ENCODE measurements at regions of chr21 and their contacts with region 1.

Region 1: DNA sequence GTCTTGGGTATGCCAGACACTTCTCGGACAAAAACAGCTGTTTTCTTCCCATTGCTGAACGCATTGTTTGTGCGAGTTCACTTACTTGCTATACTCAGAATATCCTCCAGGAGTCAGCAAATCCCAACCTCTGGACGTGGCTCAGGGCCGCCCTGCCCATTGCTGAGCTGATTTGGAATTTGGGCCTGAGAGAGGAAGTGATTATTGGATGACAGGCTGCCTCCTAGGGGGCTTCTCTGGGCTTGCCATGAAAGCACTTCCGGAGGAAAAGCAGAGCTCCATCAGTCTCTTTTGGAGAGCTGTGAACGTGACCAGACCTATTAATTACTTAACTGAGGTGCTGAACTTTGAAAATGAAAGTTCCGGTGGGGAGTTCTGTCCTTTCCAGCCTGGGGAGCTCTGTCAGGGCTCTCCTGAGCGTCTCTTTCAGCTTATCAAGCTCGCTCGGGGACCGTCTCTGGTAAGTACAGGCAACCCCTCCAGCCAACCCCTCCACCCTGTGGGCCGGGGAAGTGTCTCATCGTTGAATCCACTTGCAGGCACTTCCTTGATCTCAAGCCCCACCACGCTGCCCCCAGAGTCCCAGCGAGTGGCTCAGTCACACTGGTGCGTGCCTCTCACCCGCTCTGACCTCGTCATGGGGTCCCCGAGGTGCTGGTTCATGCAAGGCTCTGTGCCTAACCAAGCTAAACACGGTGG is 76.9 kb downstream of the CLIC6 start:
- DNase-seq: peak; percentile 76
- H3K4me3 ChIP-seq: peak overlapping the region in 1 of 2 experiments; percentile 14; a peak in 1 of 4 replicates
- H3K27ac ChIP-seq: no peak overlapping the region; a peak in 1 of 4 replicates
- H3K4me1 ChIP-seq: no peaks in the 10 kb centered on the region; a peak in 1 of 4 replicates
- H3K27me3 ChIP-seq: peaks cover 5% of the 10 kb centered on the region; the same call in 1 of the 2 replicates
- CTCF ChIP-seq: peak; percentile 91
- EP300 ChIP-seq: no peak
- RAD21 ChIP-seq: peak; percentile 97

Region 2: DNA sequence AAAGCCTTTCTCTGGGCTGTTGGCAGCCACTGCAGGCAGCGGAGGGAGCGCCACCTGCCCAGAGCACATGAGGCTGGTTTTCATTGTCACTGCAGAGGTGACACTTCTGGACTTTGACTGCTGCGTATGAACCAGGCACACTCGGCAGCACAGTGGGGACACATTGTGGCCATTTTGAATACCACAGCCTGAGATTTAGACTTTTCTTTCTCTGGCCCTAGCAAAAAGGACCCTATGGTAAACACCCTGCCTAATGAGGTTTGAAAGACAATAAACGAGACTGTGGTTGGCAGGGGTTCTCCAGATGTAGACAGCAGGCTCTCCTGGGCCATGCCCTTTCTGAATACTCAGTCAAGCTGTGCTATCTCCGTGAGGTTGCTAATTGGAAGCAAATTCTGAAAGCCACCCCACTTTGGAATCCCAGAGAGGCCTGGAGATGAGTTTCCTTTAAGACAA is 393.9 kb before region 1 on chr21:
- CTCF ChIA-PET with region 1: no interaction called
- POLR2A ChIA-PET with region 1: no interaction called
- DNase-seq: peak; percentile 66
- H3K4me3 ChIP-seq: no peak overlapping the region; a peak in 1 of 4 replicates
- H3K27ac ChIP-seq: no peak overlapping the region
- H3K4me1 ChIP-seq: no peaks in the 10 kb centered on the region; a peak in 1 of 4 replicates
- H3K27me3 ChIP-seq: no peaks in the 10 kb centered on the region; the same call in 1 of the 2 replicates
- CTCF ChIP-seq: peak; percentile 66
- EP300 ChIP-seq: no peak
- RAD21 ChIP-seq: peak; percentile 95

Region 3: DNA sequence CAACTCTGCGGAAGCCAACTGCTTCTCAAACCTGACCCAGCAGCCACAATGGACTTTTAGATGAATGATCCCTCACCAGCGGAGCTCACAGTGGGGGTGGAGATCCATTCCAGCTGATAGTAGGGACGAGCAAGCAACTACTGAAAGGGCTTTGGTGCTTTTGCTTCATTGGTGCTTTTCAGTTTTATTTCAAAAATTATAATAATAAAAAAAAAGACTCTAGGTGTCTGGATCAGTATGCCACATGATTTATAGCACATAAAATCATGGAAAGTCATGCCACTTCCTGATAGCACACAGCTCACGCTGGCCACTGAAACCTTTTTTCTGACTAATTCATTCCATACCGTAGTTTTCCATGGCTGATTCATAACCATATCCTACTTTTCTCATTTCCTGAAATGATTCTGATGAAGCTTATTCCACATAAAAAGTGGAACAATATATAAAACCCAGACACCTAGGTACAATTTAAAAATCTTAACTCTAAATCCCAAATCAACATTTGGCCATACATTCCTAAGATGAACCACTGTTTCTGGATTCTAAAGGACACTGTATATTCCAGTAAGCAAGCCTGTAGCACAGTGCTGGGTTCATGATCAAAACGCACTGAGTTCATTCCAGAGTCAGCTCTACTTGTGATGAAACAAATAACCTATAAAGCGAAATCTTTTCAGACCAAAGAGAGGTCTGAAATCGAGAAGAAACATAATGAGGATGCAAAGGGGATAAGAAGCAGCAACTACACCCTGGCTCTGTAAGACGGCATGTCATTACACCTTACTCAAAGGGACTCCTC is 192.4 kb before region 1 on chr21:
- CTCF ChIA-PET with region 1: no interaction called
- POLR2A ChIA-PET with region 1: no interaction called
- DNase-seq: no peak
- H3K4me3 ChIP-seq: peak overlapping the region; percentile 9 to 24; a peak in 2 of 4 replicates
- H3K27ac ChIP-seq: peak overlapping the region; percentile 77 to 97
- H3K4me1 ChIP-seq: peaks cover 0 to 19% of the 10 kb centered on the region in 2 experiments; a peak in 1 of 4 replicates
- H3K27me3 ChIP-seq: no peaks in the 10 kb centered on the region
- CTCF ChIP-seq: no peak
- EP300 ChIP-seq: peak in 1 of 2 experiments; percentile 52; a peak in 1 of 4 replicates
- RAD21 ChIP-seq: no peak

Region 4: GRCh38 chr21:34669149-34669879 is 76.4 kb before region 1 on chr21:
- CTCF ChIA-PET with region 1: no interaction called
- POLR2A ChIA-PET with region 1: no interaction called
- DNase-seq: peak; percentile 26
- H3K4me3 ChIP-seq: peak overlapping the region in 1 of 2 experiments; percentile 24; a peak in 2 of 4 replicates
- H3K27ac ChIP-seq: no peak overlapping the region
- H3K4me1 ChIP-seq: peaks cover 0 to 5% of the 10 kb centered on the region in 2 experiments; a peak in 1 of 4 replicates
- H3K27me3 ChIP-seq: peaks cover 80% of the 10 kb centered on the region
- CTCF ChIP-seq: no peak
- EP300 ChIP-seq: no peak
- RAD21 ChIP-seq: no peak

Region 5: GRCh38 chr21:34688145-34688544 is 57.6 kb before region 1 on chr21:
- CTCF ChIA-PET with region 1: interaction called, 11 read pairs
- POLR2A ChIA-PET with region 1: no interaction called
- DNase-seq: peak; percentile 70
- H3K4me3 ChIP-seq: no peak overlapping the region
- H3K27ac ChIP-seq: no peak overlapping the region
- H3K4me1 ChIP-seq: no peaks in the 10 kb centered on the region; a peak in 1 of 4 replicates
- H3K27me3 ChIP-seq: peaks cover 38% of the 10 kb centered on the region; the same call in 1 of the 2 replicates
- CTCF ChIP-seq: peak; percentile 77
- EP300 ChIP-seq: no peak
- RAD21 ChIP-seq: peak; percentile 61

Region 6: DNA sequence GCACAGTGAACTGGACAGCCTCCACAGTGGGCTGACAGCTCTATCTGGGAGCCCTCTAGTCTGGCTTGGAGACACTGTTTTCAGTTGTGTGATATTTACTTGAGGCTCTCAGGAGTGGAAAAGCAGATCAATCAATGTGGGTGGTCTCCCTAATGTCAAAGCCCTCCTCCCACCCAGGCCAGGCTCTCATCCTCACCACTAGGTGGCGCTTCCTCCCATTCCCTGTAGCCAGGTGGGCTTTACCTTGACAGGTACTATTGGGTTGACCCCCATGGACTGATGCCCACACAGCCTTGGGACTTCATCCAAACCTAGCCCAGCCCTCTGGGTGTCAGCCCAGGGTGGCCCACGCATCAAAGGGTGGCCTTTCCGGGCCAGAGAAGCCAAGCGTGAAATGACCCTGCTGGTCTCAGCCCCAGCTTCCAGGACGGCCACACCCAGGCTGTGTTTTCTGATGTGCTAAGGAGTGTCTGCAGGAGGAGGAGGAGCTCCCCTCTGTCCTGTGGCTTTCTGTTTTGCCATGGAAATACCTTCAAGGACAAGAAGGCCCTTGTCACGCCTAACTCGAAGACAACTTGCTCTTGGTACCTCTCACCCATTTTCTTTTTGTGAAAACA is 22.9 kb before region 1 on chr21:
- CTCF ChIA-PET with region 1: interaction called, 12 read pairs
- POLR2A ChIA-PET with region 1: no interaction called
- DNase-seq: peak; percentile 35
- H3K4me3 ChIP-seq: no peak overlapping the region; a peak in 1 of 4 replicates
- H3K27ac ChIP-seq: no peak overlapping the region
- H3K4me1 ChIP-seq: no peaks in the 10 kb centered on the region
- H3K27me3 ChIP-seq: no peaks in the 10 kb centered on the region; the same call in 1 of the 2 replicates
- CTCF ChIP-seq: peak; percentile 56
- EP300 ChIP-seq: no peak
- RAD21 ChIP-seq: no peak

Region 7: DNA sequence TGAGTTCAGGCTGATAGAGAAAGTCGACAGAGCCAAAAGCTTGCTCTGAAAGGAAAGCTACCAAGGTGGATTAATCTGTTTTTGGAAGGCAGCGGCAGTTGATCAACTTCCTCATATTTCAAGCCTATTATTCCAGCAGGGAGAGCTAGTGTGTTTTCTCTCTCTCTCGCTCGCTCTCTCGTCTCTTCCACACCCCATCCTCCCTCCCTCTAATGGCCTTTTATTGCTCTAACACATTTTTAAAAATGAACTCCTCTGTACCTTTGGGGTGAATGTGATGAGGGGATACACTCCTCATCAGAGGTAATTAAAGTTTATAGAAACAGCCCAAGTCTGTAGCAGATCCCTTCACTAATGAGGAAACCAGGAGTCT is 49.5 kb after region 1 on chr21:
- CTCF ChIA-PET with region 1: no interaction called
- POLR2A ChIA-PET with region 1: no interaction called
- DNase-seq: no peak
- H3K4me3 ChIP-seq: no peak overlapping the region
- H3K27ac ChIP-seq: peak overlapping the region in 1 of 2 experiments; percentile 36; a peak in 2 of 4 replicates
- H3K4me1 ChIP-seq: peaks cover 0 to 8% of the 10 kb centered on the region in 2 experiments; a peak in 2 of 4 replicates
- H3K27me3 ChIP-seq: no peaks in the 10 kb centered on the region
- CTCF ChIP-seq: no peak
- EP300 ChIP-seq: no peak
- RAD21 ChIP-seq: no peak

Region 8: GRCh38 chr21:34812504-34813265 is 67.0 kb after region 1 on chr21:
- CTCF ChIA-PET with region 1: interaction called, 10 read pairs
- POLR2A ChIA-PET with region 1: no interaction called
- DNase-seq: no peak
- H3K4me3 ChIP-seq: peak overlapping the region in 1 of 2 experiments; percentile 6; a peak in 1 of 4 replicates
- H3K27ac ChIP-seq: peak overlapping the region; percentile 97 to 99
- H3K4me1 ChIP-seq: peaks cover 62 to 70% of the 10 kb centered on the region in 2 experiments
- H3K27me3 ChIP-seq: no peaks in the 10 kb centered on the region
- CTCF ChIP-seq: no peak
- EP300 ChIP-seq: peak; percentile 65 to 95
- RAD21 ChIP-seq: no peak

Region 9: DNA sequence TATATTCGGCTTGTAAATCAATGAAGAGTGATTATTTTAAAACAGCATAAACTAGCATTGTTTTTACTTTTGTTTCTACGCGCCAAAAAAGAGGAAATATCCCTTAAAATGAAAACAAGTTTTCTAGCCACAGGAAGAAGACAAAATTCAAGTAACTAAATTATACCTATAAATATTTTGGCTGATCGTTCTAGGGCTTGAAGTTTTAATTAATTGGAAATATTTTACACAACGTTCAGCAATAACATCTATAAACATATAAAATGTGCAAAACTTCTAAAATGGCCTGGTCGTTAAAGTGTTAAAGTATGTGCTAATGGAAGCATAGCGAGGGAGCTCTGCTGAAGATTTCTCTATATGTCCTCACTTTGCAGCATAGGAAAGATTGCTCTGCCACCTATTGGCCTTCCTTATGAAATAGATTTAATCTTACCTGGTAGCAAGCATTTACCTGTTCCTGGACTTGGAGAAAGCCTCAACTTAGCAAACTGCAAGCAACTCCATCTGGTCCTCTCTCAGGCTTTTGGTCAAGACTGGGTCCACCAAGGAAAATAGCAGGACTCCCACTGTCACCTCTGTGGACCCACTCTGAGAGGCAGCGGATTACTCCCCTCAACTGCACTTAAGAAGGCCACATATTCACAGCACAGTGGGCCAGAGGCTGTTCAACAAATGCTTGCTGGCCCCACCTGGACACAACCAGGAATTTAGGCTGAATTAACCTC is 654.7 kb after region 1 on chr21:
- CTCF ChIA-PET with region 1: interaction called, 19 read pairs
- POLR2A ChIA-PET with region 1: no interaction called
- DNase-seq: peak; percentile 43
- H3K4me3 ChIP-seq: no peak overlapping the region
- H3K27ac ChIP-seq: no peak overlapping the region
- H3K4me1 ChIP-seq: peaks cover 0 to 9% of the 10 kb centered on the region in 2 experiments; a peak in 2 of 4 replicates
- H3K27me3 ChIP-seq: no peaks in the 10 kb centered on the region
- CTCF ChIP-seq: peak; percentile 67
- EP300 ChIP-seq: no peak
- RAD21 ChIP-seq: peak; percentile 79

Region 10: DNA sequence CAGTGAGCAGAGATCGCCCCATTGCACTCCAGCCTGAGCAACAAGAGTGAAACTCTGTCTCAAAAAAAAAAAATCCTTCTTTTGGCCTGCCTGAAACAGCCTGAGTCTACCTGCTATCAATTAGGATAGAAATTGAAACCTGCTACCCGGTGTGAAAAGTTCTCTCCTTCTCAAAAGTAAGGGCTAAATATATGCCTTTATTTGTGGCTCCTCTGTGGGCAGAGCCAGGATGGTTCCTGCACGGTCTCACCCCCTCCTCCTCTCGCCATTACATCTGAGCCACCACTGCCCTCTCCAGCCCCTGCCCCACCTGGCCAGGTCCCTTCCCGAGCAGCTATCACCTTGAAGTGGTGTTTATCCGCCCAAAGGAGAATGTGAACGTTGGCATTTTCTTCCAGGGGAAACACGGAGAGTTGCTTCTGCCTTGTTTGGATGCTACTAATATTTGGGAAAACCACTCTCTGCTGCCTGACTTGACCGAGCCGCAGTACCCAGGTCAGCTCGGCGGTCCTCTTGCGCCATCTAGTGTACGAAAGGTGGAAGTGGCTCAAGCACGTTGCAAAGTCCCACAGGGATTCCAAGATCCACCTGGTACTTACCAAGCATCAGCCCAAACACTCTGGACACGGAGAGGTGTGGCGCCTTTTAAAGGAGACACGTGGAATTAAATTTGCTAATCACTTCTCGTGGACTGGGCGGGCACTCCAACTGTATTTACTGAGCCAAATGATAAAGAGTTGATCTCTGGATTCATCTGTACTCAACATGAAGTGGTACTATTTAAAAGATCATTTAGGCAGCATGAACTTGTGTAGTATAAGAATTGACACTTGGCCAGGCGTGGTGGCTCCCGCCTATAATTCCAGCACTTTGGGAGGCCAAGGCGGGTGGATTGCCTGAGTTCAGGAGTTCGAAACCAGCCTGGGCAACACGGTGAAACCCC is 1282.7 kb after region 1 on chr21:
- CTCF ChIA-PET with region 1: interaction called, 19 read pairs
- POLR2A ChIA-PET with region 1: no interaction called
- DNase-seq: peak; percentile 83
- H3K4me3 ChIP-seq: no peak overlapping the region; a peak in 1 of 4 replicates
- H3K27ac ChIP-seq: no peak overlapping the region
- H3K4me1 ChIP-seq: peaks cover 0 to 4% of the 10 kb centered on the region in 2 experiments; a peak in 1 of 4 replicates
- H3K27me3 ChIP-seq: no peaks in the 10 kb centered on the region
- CTCF ChIP-seq: peak; percentile 93
- EP300 ChIP-seq: no peak
- RAD21 ChIP-seq: peak; percentile 98